ENCODE measurements at regions of chr17 and their contacts with region 1.

Region 1: GRCh38 chr17:67475236-67475937 is 98.3 kb downstream of the PITPNC1 start:
- DNase-seq: peak; percentile 74
- H3K27ac ChIP-seq: no peak overlapping the region
- CTCF ChIP-seq: peak; percentile 97

Region 2: DNA sequence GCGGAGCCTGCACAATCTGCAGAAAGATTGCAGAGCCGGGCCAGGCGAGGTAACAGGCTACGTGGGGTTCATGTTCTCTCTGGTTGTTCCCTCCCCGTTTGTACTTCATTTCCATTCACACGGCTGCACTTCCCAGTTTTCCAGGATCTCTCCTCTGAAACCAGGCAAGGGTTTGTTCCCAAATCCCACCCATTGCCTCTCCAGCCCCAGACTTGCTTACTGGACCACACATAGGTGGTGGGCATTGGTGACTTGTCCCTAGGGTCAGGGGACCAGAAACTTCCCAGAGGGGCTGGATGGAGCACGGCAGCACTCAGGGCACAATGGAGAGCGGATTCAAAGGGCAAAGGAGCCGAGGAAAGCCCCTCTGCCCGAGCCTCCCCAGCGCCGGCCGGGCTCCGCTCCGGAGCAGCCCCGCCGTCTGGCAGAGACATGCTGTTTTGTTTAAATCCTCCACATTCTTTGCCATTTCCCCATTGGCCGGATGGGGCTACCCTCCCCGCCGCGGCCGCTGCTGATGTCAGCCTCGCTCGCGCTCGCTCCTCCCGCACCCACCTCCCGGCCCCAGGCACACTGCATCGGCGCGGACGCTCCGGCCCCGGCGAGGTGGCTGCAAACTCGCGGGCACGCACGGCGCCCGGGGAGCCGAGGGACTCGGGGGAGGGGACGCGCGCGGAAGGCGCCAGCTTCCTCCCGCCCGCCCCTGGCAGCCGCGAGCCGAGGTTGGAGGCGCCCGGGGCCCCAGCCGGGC is 98.5 kb before region 1 on chr17 and contains the start of gene PITPNC1:
- CTCF ChIA-PET with region 1: interaction called, 19 read pairs
- POLR2A ChIA-PET with region 1: no interaction called
- DNase-seq: peak; percentile 84
- H3K27ac ChIP-seq: peak within 1 kb of the TSS; percentile 86
- CTCF ChIP-seq: no peak

Region 3: DNA sequence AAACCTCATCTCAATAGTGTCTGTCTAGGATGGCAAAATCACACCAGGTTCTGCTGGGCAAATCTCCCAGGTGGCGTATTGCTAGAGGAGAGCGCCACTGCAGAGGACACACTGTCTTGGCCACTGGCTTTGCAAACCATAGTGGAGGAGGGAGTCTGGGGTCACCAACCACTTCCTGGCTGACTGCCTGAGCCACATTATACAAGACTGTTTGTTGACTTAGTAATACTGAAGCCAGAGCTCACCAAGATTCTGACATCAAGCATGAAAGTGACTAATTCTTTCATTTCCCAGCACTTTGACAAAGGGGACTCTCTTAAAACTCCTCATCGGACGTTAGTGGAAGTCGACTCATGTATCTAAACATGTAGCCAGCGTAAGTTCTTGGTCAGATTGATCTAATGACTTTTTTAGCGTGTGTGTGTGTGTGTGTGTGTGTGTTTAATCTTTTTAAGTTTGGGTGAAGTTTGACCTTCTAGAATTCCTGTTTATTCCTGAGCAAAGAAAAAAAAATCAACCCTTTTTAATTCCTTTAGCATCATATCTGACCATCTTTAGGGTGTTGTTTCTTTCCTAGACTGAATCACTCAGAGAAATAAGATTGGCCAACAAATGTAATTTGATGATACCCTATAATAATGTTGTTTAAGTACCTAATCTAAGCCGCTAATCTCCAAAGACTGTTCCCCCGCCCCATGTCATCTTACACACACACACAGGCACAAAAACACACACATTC is 84.6 kb before region 1 on chr17:
- CTCF ChIA-PET with region 1: interaction called, 26 read pairs
- POLR2A ChIA-PET with region 1: no interaction called
- DNase-seq: no peak
- H3K27ac ChIP-seq: peak overlapping the region; percentile 56
- CTCF ChIP-seq: no peak

Region 4: GRCh38 chr17:67557921-67558320 is 82.5 kb after region 1 on chr17:
- CTCF ChIA-PET with region 1: no interaction called
- POLR2A ChIA-PET with region 1: no interaction called
- DNase-seq: no peak
- H3K27ac ChIP-seq: no peak overlapping the region
- CTCF ChIP-seq: no peak